ENCODE measurements at regions of chr4 and their contacts with region 1.

Region 1: GRCh38 chr4:87679449-87680169 is 29.5 kb downstream of the DMP1 start:
- DNase-seq: peak; percentile 36
- H3K4me3 Mint-ChIP-seq: no peak overlapping the region
- H3K27ac Mint-ChIP-seq: no peak overlapping the region
- H3K4me1 Mint-ChIP-seq: no peaks in the 10 kb centered on the region
- H3K27me3 Mint-ChIP-seq: no peaks in the 10 kb centered on the region

Region 2: DNA sequence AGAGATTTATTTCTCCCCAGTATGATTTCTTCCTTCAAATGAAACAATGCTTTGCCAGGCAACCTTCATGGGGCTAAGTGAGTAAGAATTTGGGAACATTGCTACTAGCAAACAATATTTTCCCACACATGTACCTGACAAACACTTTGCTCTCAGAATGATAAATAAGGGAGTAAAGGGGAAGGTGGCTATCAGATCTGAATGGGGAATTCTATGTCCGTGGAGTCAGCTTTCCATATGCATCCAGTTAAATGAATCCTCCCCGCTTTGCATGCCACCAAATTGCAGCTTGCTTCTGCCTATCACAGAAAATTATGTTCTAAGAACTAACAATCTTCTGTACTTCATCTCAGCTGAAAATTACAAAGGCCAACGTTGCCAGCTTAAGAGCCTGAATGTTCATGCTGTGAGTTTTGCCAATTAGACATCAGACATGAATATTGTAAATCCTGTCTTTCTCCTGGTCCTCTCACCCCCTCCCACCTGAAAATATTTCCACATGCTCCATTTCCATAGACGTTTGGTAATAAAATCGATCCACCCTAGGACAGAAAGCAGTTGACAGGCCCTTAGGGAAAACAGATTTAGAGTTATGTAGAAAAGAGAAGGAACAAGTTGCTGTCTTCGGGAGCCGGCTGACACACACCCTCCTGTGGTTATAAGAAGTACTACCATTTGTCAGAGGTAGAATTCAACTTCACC is 159.4 kb after region 1 on chr4:
- CTCF ChIA-PET with region 1: interaction called, 5 read pairs
- POLR2A ChIA-PET with region 1: no interaction called
- intact Hi-C with region 1: loop called (anchors 1 kb)
- DNase-seq: peak; percentile 11
- H3K4me3 Mint-ChIP-seq: no peak overlapping the region
- H3K27ac Mint-ChIP-seq: no peak overlapping the region
- H3K4me1 Mint-ChIP-seq: no peaks in the 10 kb centered on the region
- H3K27me3 Mint-ChIP-seq: peaks cover 14% of the 10 kb centered on the region